Mammary epithelial cell (primary cell): ENCODE measurements at regions of chr4 and their contacts with region 1.

Region 1: GRCh38 chr4:7067452-7068278 is at the start of gene GRPEL1:
- DNase-seq: peak; percentile 100
- H3K4me3 ChIP-seq: peak within 1 kb of the TSS; percentile 75 to 94 (median 93)
- H3K27ac ChIP-seq: peak within 1 kb of the TSS; percentile 79
- H3K4me1 ChIP-seq: peaks cover 16% of the 10 kb centered on the region
- H3K27me3 ChIP-seq: no peaks in the 10 kb centered on the region
- CTCF ChIP-seq: no peak
- total RNA-seq, gene GRPEL1: 18.5 to 66.1 TPM

Region 2: GRCh38 chr4:6446538-6447451 is 620.9 kb before region 1 on chr4:
- CTCF ChIA-PET with region 1: no interaction called
- dilution Hi-C with region 1: no loop called
- in situ Hi-C with region 1: no loop called
- intact Hi-C with region 1: no loop called
- DNase-seq: no peak
- H3K4me3 ChIP-seq: no peak overlapping the region
- H3K27ac ChIP-seq: no peak overlapping the region
- H3K4me1 ChIP-seq: no peaks in the 10 kb centered on the region
- H3K27me3 ChIP-seq: no peaks in the 10 kb centered on the region
- CTCF ChIP-seq: no peak

Region 3: GRCh38 chr4:6709230-6710114 is 358.2 kb before region 1 on chr4 and contains the start of gene MRFAP1L1:
- CTCF ChIA-PET with region 1: no interaction called
- dilution Hi-C with region 1: no loop called
- in situ Hi-C with region 1: loop called (anchors 25 kb)
- intact Hi-C with region 1: no loop called
- DNase-seq: peak; percentile 96
- H3K4me3 ChIP-seq: peak within 1 kb of the TSS; percentile 73 to 96 (median 81)
- H3K27ac ChIP-seq: peak within 1 kb of the TSS; percentile 66
- H3K4me1 ChIP-seq: peaks cover 16% of the 10 kb centered on the region
- H3K27me3 ChIP-seq: no peaks in the 10 kb centered on the region
- CTCF ChIP-seq: peak in 1 of 2 donors; percentile 15
- total RNA-seq, gene MRFAP1L1: 34.0 to 35.9 TPM

Region 4: DNA sequence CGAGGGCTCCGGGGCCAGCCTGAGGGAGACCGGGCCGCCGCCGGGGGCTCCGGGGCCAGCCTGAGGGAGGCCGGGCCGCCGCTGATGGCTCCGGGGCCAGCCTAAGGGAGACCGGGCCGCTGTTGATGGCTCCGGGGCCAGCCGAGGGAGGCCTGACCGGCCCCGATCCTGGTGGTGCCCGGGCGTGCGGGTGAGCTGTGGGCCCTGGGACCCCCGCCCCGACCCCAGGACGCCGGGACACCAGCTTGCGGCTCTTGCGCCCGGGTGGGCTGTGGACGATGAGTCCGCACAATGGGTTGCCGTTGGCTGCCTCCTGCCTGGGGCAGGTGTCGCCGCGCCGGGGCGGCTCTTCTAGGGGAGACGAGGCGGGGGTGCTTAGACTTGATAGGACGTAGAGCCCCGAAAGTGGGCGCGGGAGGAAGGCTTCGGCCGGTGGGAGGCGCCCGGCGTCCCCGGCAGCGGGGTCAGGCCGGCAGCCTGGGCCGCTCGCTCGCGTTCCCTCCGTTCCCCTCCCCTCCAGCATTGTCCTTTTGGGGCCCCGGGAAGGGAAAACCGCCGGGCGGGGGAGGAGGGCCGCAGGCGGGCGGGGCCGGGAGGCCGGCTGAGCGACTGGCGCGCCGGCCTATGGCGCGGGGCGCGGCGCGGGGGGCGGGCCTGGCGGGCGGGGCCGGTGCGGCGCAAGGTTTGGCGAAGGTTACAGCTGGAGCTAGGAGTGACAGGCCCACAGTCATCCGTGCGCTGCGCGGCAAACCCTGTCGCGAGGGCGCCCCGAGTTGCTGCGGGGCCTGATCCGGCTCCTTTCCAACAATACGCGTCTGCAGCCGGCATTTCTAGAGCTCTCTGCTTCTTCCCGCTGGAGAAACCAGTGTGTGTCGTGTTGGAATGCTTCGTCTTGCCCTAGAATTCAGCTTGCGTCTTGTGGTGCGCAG is 284.3 kb before region 1 on chr4:
- CTCF ChIA-PET with region 1: no interaction called
- dilution Hi-C with region 1: no loop called
- in situ Hi-C with region 1: no loop called
- intact Hi-C with region 1: loop called (anchors 10 kb)
- DNase-seq: peak; percentile 82
- H3K4me3 ChIP-seq: peak overlapping the region; percentile 85 to 91 (median 86)
- H3K27ac ChIP-seq: peak overlapping the region; percentile 65
- H3K4me1 ChIP-seq: peaks cover 3% of the 10 kb centered on the region
- H3K27me3 ChIP-seq: no peaks in the 10 kb centered on the region
- CTCF ChIP-seq: peak in 1 of 2 donors; percentile 27

Region 5: DNA sequence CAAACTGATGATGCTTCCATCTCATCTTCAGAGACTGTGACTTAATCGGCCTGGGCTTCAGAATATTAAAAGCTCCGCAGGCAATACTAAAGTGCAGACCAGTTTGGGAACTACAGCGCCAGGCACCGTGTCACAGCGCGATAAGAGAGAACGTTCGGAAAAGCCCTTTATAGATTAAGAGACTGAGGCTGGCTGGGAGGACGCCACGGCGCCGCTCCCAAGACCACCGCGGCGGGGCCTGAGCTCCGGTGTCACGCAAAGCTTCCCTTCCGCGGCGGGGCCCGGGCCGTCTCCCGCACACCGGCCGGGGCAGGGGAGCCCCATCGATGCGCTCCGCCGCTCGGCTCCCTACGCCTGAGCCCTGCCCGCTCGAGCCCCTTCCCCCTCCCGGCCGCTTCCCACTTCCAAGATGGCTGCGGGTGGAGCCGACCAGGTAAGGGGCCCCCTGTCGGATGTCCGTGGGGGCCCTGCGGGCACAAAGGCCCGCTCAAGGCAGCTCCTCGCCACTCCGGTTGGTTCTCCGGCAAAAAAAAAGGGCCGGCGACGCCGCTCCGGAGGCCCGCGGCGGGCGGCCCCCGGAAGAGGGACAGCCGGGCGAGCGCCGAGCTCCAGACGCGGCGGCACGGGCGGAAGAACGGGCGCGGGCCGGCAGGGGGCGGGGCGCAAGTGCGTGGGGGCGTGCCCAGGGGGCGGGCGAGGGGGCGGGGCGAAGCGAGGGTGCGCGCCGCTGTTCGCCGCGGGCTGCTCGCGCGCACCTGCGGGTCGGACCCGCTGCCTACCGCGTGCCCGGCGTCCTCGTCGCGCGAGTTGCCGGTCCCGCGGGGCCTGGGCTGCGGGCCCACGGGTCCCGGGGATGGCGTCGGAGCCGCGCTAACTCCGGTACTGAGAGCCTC is 158.3 kb before region 1 on chr4 and contains the start of gene TBC1D14:
- CTCF ChIA-PET with region 1: no interaction called
- dilution Hi-C with region 1: no loop called
- in situ Hi-C with region 1: loop called (anchors 10 kb)
- intact Hi-C with region 1: loop called (anchors 1 kb)
- DNase-seq: peak; percentile 81
- H3K4me3 ChIP-seq: peak within 1 kb of the TSS; percentile 61 to 94 (median 77)
- H3K27ac ChIP-seq: peak within 1 kb of the TSS; percentile 89
- H3K4me1 ChIP-seq: peaks cover 18% of the 10 kb centered on the region
- H3K27me3 ChIP-seq: no peaks in the 10 kb centered on the region
- CTCF ChIP-seq: peak in 1 of 2 donors; percentile 27
- total RNA-seq, gene TBC1D14: 62.9 to 89.5 TPM

Region 6: DNA sequence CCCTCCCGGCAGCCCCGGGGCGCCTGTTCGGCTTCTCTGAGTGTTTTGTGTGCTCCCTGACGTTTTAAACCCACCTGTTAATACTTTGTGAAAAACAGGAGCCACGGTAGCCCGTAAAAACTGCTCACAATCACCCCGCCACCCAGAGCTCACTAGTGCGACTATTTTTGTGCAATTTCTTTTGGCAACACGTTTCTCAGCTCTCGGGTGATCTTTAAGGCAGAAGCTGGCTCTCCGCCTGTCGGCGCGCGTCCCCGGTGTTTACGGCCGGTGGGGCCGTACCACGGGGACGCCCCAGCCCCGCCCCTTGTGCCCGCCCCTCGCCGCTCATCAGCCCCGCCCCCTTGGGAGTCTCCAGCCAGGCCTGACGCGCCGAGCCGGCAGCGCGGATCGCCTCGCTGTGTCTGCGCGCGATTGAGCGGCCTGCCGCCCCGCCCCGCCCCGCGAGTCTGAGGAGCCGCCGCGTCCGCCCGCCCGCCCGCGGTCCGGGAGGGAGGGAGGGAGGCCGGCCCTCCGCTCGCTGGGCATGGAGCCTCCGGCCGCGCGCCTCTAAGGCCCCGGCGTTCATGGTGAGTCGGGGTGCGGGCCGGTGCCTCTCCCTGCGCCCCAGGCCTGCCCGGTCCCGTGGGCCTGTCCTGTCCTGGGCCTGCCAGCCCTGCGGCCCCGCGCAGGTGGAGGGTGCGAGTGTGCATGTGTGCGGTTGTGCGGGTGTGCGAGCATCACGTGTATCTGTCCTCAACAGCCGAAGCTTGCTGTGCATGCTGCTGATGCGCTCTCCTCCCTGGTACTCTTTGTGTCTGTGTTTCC is 80.7 kb before region 1 on chr4:
- CTCF ChIA-PET with region 1: no interaction called
- dilution Hi-C with region 1: no loop called
- in situ Hi-C with region 1: no loop called
- intact Hi-C with region 1: loop called (anchors 1 kb)
- DNase-seq: peak; percentile 93
- H3K4me3 ChIP-seq: peak overlapping the region; percentile 82 to 95 (median 95)
- H3K27ac ChIP-seq: peak overlapping the region; percentile 90
- H3K4me1 ChIP-seq: peaks cover 42% of the 10 kb centered on the region
- H3K27me3 ChIP-seq: no peaks in the 10 kb centered on the region
- CTCF ChIP-seq: peak in 1 of 2 donors; percentile 36

Region 7: GRCh38 chr4:7021930-7022658 is 45.6 kb before region 1 on chr4:
- CTCF ChIA-PET with region 1: no interaction called
- dilution Hi-C with region 1: no loop called
- in situ Hi-C with region 1: no loop called
- intact Hi-C with region 1: loop called (anchors 1 kb)
- DNase-seq: peak; percentile 69
- H3K4me3 ChIP-seq: no peak overlapping the region
- H3K27ac ChIP-seq: peak overlapping the region; percentile 74
- H3K4me1 ChIP-seq: peaks cover 29% of the 10 kb centered on the region
- H3K27me3 ChIP-seq: no peaks in the 10 kb centered on the region
- CTCF ChIP-seq: no peak

Region 8: GRCh38 chr4:7423801-7424552 is 356.3 kb after region 1 on chr4:
- CTCF ChIA-PET with region 1: no interaction called
- dilution Hi-C with region 1: no loop called
- in situ Hi-C with region 1: no loop called
- intact Hi-C with region 1: no loop called
- DNase-seq: no peak
- H3K4me3 ChIP-seq: no peak overlapping the region
- H3K27ac ChIP-seq: no peak overlapping the region
- H3K4me1 ChIP-seq: peaks cover 10% of the 10 kb centered on the region
- H3K27me3 ChIP-seq: no peaks in the 10 kb centered on the region
- CTCF ChIP-seq: no peak